ENCODE measurements at regions of chr11 and their contacts with region 1.

Region 1: GRCh38 chr11:64355078-64355940 is 3.7 kb upstream of the RPS6KA4 start:
- DNase-seq: peak; percentile 89
- H3K4me3 ChIP-seq: peak overlapping the region; percentile 18 to 40; a peak in 2 of 4 replicates
- H3K27ac ChIP-seq: peak overlapping the region; percentile 34 to 36; a peak in 3 of 4 replicates
- H3K4me1 ChIP-seq: peaks cover 20 to 28% of the 10 kb centered on the region in 2 experiments; a peak in 3 of 4 replicates
- H3K27me3 ChIP-seq: no peaks in the 10 kb centered on the region
- CTCF ChIP-seq: peak; percentile 74
- EP300 ChIP-seq: no peak
- RAD21 ChIP-seq: peak; percentile 65

Region 2: GRCh38 chr11:64225612-64226506 is 129.4 kb before region 1 on chr11 and contains the starts of genes NUDT22 and TRPT1:
- CTCF ChIA-PET with region 1: no interaction called
- POLR2A ChIA-PET with region 1: no interaction called
- DNase-seq: peak; percentile 97
- H3K4me3 ChIP-seq: peak within 1 kb of the TSS; percentile 88 to 97
- H3K27ac ChIP-seq: peak within 1 kb of the TSS; percentile 47 to 88
- H3K4me1 ChIP-seq: peaks cover 9 to 34% of the 10 kb centered on the region in 2 experiments; a peak in 2 of 4 replicates
- H3K27me3 ChIP-seq: no peaks in the 10 kb centered on the region
- CTCF ChIP-seq: peak; percentile 16
- EP300 ChIP-seq: no peak
- RAD21 ChIP-seq: no peak
- polyA plus RNA-seq, gene NUDT22: 72.7 and 74.0 TPM in 2 replicates
- polyA plus RNA-seq, gene TRPT1: 61.5 and 62.4 TPM in 2 replicates

Region 3: GRCh38 chr11:64341851-64342791 is 13.2 kb before region 1 on chr11:
- CTCF ChIA-PET with region 1: interaction called, 42 read pairs
- POLR2A ChIA-PET with region 1: no interaction called
- DNase-seq: peak; percentile 56
- H3K4me3 ChIP-seq: no peak overlapping the region
- H3K27ac ChIP-seq: no peak overlapping the region
- H3K4me1 ChIP-seq: no peaks in the 10 kb centered on the region
- H3K27me3 ChIP-seq: no peaks in the 10 kb centered on the region
- CTCF ChIP-seq: no peak
- EP300 ChIP-seq: no peak
- RAD21 ChIP-seq: no peak

Region 4: GRCh38 chr11:64500176-64501013 is 145.1 kb after region 1 on chr11:
- CTCF ChIA-PET with region 1: no interaction called
- POLR2A ChIA-PET with region 1: no interaction called
- DNase-seq: no peak
- H3K4me3 ChIP-seq: no peak overlapping the region
- H3K27ac ChIP-seq: no peak overlapping the region
- H3K4me1 ChIP-seq: peaks cover 0 to 3% of the 10 kb centered on the region in 2 experiments; a peak in 1 of 4 replicates
- H3K27me3 ChIP-seq: no peaks in the 10 kb centered on the region
- CTCF ChIP-seq: no peak
- EP300 ChIP-seq: no peak
- RAD21 ChIP-seq: no peak